ENCODE measurements at regions of chr2 and their contacts with region 1.

Region 1: DNA sequence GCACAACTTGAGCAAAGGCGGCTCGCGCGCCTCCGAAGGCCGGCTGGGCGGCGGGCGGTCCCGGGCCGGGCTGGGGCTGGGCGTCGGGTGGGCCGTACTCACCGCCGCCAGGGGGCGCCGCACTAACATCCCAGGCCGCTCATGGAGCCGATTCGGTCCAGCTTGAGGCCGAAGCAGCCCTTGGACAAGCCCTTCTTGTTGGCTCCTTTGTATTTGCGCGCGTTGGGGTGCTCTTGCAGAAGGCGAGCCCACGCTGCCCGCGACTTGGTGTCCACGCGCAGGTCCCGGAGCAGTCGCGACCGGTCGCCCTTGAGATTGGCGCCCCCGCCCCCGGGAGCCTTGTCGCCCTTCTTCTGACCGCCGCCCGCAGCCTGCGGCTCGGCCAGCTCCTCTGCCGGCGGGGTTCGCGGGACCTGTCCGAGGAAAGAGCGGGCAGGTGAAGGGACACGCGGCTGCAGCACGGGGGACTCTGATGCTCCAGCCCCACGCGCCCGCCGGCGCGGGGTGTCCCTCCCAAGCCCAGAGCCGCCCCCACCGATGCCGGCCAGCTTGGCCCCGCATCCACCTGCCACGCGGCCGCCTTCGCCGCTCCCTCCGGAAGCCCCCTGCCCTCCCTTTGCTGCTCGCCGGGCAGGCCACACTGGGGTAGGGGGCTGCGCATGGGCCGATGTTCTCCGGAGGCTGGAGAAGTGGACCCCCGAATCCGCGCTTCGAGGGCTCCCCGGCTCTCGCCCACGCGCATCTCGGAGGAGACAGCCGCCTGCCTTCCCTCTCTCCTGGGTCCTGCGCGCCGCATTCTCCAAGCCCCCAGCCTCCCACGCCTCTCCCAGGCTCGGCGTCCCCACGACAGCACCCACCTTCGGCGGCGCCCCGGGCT is 655 bp downstream of the NPPC start:
- DNase-seq: peak; percentile 82
- H3K4me3 ChIP-seq: peak overlapping the region; percentile 27 to 28
- H3K27ac ChIP-seq: no peak overlapping the region
- H3K4me1 ChIP-seq: peaks cover 6% of the 10 kb centered on the region
- H3K27me3 ChIP-seq: peaks cover 3% of the 10 kb centered on the region
- CTCF ChIP-seq: peak; percentile 92 to 95 (median 94)
- POLR2A ChIP-seq: no peak

Region 2: DNA sequence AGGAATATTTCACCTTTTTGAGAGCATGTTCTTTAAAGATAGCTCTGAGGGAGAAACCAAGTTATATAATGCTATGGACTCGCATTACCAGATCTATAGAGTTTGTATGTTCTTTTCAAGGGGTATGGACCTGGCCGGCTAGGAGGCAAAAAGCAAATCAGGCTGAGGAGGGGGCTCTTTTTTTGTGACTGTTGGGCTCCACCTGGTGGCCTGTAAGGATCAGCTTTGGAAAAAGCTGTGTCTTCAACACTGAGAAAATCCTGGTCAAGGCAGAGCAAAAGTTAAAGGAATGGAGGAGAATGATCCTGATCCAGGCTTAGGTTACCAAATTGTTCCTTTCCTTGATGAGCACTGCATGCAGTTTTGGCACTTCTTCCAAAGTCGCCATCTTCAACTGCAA is 216.5 kb after region 1 on chr2:
- intact Hi-C with region 1: loop called (anchors 5 kb)
- DNase-seq: no peak
- H3K4me3 ChIP-seq: no peak overlapping the region
- H3K27ac ChIP-seq: no peak overlapping the region
- H3K4me1 ChIP-seq: no peaks in the 10 kb centered on the region
- H3K27me3 ChIP-seq: no peaks in the 10 kb centered on the region
- CTCF ChIP-seq: peak; percentile 20 to 72 (median 55)
- POLR2A ChIP-seq: no peak

Region 3: GRCh38 chr2:232327105-232328041 is 401.8 kb after region 1 on chr2:
- intact Hi-C with region 1: loop called (anchors 2 kb)
- DNase-seq: peak; percentile 53
- H3K4me3 ChIP-seq: no peak overlapping the region
- H3K27ac ChIP-seq: no peak overlapping the region
- H3K4me1 ChIP-seq: peaks cover 11% of the 10 kb centered on the region
- H3K27me3 ChIP-seq: no peaks in the 10 kb centered on the region
- CTCF ChIP-seq: peak; percentile 85 to 97 (median 91)
- POLR2A ChIP-seq: no peak

Region 4: GRCh38 chr2:232521959-232522622 is 596.5 kb after region 1 on chr2:
- intact Hi-C with region 1: loop called (anchors 5 kb)
- DNase-seq: peak; percentile 27
- H3K4me3 ChIP-seq: peak overlapping the region in 1 of 2 donors; percentile 2
- H3K27ac ChIP-seq: no peak overlapping the region
- H3K4me1 ChIP-seq: peaks cover 9% of the 10 kb centered on the region
- H3K27me3 ChIP-seq: peaks cover 23% of the 10 kb centered on the region
- CTCF ChIP-seq: peak; percentile 76 to 89 (median 86)
- POLR2A ChIP-seq: no peak

Measured in prostate gland (tissue), 2 donors.